OCI-LY7 (cell line): ENCODE measurements at regions of chr15 and their contacts with region 1.

Region 1: DNA sequence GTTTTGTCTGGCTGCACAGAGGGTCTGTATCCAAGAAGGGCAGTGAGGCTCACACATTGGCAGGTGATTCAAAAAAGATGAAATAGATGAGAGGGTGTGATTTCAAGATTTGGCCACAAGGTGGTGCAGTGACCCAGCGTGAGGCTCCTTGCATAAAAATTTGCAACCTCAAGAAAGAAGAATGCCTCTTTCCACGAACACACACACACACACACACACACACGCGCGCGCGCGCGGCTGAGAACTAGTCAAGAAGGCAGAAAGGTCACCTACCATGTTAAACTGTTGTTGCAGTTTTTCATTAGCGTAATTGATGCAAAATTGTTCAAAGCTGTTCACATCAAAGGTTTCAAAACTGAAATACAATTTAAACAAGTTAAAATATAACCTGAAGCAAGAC is 39.2 kb downstream of the MYO5C start:
- DNase-seq: peak; percentile 84
- H3K4me3 ChIP-seq: peak overlapping the region; percentile 44
- H3K27ac ChIP-seq: no peak overlapping the region
- H3K4me1 ChIP-seq: peaks cover 25% of the 10 kb centered on the region
- CTCF ChIP-seq: peak; percentile 88

Region 2: DNA sequence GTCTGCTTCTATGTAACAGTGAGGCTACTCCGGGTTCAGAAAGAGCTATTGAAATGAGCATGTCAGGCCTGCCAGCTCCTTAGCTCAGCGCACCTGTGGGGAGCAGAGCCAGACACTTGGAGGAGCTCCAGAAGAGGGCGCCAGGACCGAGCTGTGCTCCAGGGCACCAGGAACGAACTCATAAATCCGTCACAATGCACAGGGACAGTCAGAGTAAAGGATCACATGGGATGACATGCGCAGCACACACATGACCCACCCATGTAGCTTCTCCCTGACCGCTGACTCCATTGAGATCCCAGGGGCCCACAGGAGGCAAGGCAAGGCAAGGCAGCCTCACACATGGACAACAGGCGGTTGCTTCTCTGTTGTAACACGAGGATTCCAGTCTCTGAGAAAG is 39.2 kb before region 1 on chr15:
- CTCF ChIA-PET with region 1: interaction called, 3 read pairs
- POLR2A ChIA-PET with region 1: interaction called, 3 read pairs
- intact Hi-C with region 1: loop called (anchors 1 kb)
- DNase-seq: peak; percentile 81
- H3K4me3 ChIP-seq: no peak overlapping the region
- H3K27ac ChIP-seq: peak overlapping the region; percentile 97
- H3K4me1 ChIP-seq: peaks cover 49% of the 10 kb centered on the region
- CTCF ChIP-seq: peak; percentile 90

Region 3: DNA sequence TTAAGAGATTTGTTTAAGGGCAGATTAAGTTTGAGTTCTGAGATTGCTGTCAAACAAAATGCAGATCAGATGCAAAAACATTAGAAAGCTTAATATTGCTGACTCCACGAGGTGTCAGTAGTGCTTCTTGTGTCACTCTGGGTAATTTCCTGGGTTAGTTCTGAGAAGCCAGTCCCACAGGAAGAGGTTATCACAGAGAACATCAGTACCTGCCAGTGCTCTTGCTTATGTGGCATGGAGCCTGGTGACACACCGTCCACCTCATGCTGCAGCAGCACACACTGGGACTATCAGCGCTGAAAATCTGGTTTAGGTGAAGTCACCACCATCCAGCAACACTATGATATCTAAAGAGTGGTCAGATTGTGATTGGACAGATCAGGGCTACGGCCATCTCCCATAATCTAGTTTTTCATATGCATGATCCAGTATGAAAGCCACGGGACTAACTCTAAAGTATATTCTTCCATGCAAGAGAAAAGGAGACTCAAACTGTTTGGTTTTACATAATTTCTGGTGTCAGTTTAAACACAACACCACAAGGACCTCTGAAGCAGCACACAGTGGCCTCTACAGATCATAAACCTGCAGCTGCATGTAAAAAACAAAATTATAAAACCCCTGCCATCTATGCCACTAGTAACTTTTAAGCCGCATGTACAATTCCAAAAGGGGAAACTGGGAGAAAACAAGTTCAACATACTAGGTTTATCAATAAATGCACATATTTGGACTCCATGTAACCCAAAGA is 75.3 kb after region 1 on chr15:
- CTCF ChIA-PET with region 1: interaction called, 3 read pairs
- POLR2A ChIA-PET with region 1: interaction called, 3 read pairs
- intact Hi-C with region 1: loop called (anchors 5 kb)
- DNase-seq: peak; percentile 89
- H3K4me3 ChIP-seq: peak overlapping the region; percentile 24
- H3K27ac ChIP-seq: peak overlapping the region; percentile 18
- H3K4me1 ChIP-seq: peaks cover 20% of the 10 kb centered on the region
- CTCF ChIP-seq: peak; percentile 89

Region 4: GRCh38 chr15:52528991-52529926 is 272.9 kb after region 1 on chr15:
- CTCF ChIA-PET with region 1: no interaction called
- POLR2A ChIA-PET with region 1: no interaction called
- intact Hi-C with region 1: loop called (anchors 2 kb)
- DNase-seq: peak; percentile 91
- H3K4me3 ChIP-seq: peak overlapping the region; percentile 95
- H3K27ac ChIP-seq: peak overlapping the region; percentile 76
- H3K4me1 ChIP-seq: peaks cover 22% of the 10 kb centered on the region
- CTCF ChIP-seq: peak; percentile 27; the same call in 1 of the 2 replicates

Region 5: GRCh38 chr15:52730173-52730572 is 473.8 kb after region 1 on chr15:
- CTCF ChIA-PET with region 1: interaction called, 10 read pairs
- POLR2A ChIA-PET with region 1: interaction called, 7 read pairs
- intact Hi-C with region 1: loop called (anchors 1 kb)
- DNase-seq: peak; percentile 95
- H3K4me3 ChIP-seq: no peak overlapping the region
- H3K27ac ChIP-seq: peak overlapping the region; percentile 65
- H3K4me1 ChIP-seq: peaks cover 65% of the 10 kb centered on the region
- CTCF ChIP-seq: peak; percentile 76